ENCODE measurements at regions of chr20 and their contacts with region 1.

Region 1: GRCh38 chr20:561437-562231 is 18.0 kb upstream of the CSNK2A1 start:
- DNase-seq: peak; percentile 80 to 87
- ATAC-seq: peak; percentile 78 to 93
- H3K4me3 ChIP-seq: no peak overlapping the region
- H3K27ac ChIP-seq: no peak overlapping the region
- H3K4me1 ChIP-seq: no peaks in the 10 kb centered on the region
- CTCF ChIP-seq: peak; percentile 98
- EP300 ChIP-seq: no peak
- POLR2A ChIP-seq: no peak
- RAD21 ChIP-seq: peak; percentile 95 to 97

Region 2: GRCh38 chr20:543369-544152 is 18.1 kb before region 1 on chr20 and contains the start of gene CSNK2A1:
- CTCF ChIA-PET with region 1: interaction called, 85 read pairs
- POLR2A ChIA-PET with region 1: interaction called, 4 read pairs
- DNase-seq: peak; percentile 97 to 98
- ATAC-seq: peak; percentile 99
- H3K4me3 ChIP-seq: peak within 1 kb of the TSS; percentile 62
- H3K27ac ChIP-seq: peak within 1 kb of the TSS; percentile 90 to 99
- H3K4me1 ChIP-seq: peaks cover 9% of the 10 kb centered on the region; the same call in 2 of the 3 replicates
- CTCF ChIP-seq: no peak
- EP300 ChIP-seq: no peak
- POLR2A ChIP-seq: peak; percentile 94
- RAD21 ChIP-seq: no peak
- polyA plus RNA-seq, gene CSNK2A1: 231 and 306 TPM in 2 replicates

Region 3: GRCh38 chr20:577167-577791 is 15.6 kb after region 1 on chr20:
- CTCF ChIA-PET with region 1: interaction called, 91 read pairs
- POLR2A ChIA-PET with region 1: no interaction called
- DNase-seq: peak; percentile 55 to 79
- ATAC-seq: peak; percentile 58 to 91; a peak in 4 of 6 replicates
- H3K4me3 ChIP-seq: no peak overlapping the region
- H3K27ac ChIP-seq: no peak overlapping the region
- H3K4me1 ChIP-seq: no peaks in the 10 kb centered on the region
- CTCF ChIP-seq: peak; percentile 24; the same call in 1 of the 3 replicates
- EP300 ChIP-seq: no peak
- POLR2A ChIP-seq: no peak
- RAD21 ChIP-seq: no peak

Region 4: DNA sequence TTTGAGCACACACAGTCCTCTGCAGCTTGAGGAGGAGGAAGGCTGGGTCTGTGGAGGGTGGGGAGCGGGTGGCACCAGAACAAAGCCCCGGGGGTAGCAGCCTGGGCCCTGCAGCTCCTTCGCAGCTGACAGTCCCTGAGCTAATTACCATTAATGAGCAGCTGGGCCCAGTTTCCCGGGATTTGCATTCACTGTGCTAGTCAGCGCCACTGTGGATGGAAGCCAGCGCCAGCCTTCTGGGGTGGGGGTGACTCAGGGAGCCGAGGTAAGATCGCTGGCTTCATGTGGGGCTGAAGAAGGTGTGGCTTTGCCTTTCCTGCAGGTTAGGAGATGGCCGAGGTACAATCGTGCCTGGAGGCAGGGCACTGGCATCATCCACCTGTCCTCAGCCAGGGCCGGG is 72.9 kb after region 1 on chr20:
- CTCF ChIA-PET with region 1: interaction called, 23 read pairs
- POLR2A ChIA-PET with region 1: no interaction called
- DNase-seq: no peak
- ATAC-seq: no peak
- H3K4me3 ChIP-seq: no peak overlapping the region
- H3K27ac ChIP-seq: no peak overlapping the region
- H3K4me1 ChIP-seq: peaks cover 4% of the 10 kb centered on the region; the same call in 1 of the 3 replicates
- CTCF ChIP-seq: no peak
- EP300 ChIP-seq: no peak
- POLR2A ChIP-seq: no peak
- RAD21 ChIP-seq: no peak

Region 5: GRCh38 chr20:653110-653589 is 91.5 kb after region 1 on chr20 and contains the start of gene SRXN1:
- CTCF ChIA-PET with region 1: interaction called, 87 read pairs
- POLR2A ChIA-PET with region 1: no interaction called
- DNase-seq: peak; percentile 93 to 98
- ATAC-seq: peak; percentile 83 to 86
- H3K4me3 ChIP-seq: peak within 1 kb of the TSS; percentile 87
- H3K27ac ChIP-seq: peak within 1 kb of the TSS; percentile 98
- H3K4me1 ChIP-seq: peaks cover 29% of the 10 kb centered on the region
- CTCF ChIP-seq: peak; percentile 93
- EP300 ChIP-seq: peak; percentile 52 to 81; a peak in 3 of 5 replicates
- POLR2A ChIP-seq: peak; percentile 93
- RAD21 ChIP-seq: peak; percentile 58 to 80
- polyA plus RNA-seq, gene SRXN1: 262 and 302 TPM in 2 replicates

Region 6: GRCh38 chr20:667391-667964 is 105.8 kb after region 1 on chr20:
- CTCF ChIA-PET with region 1: interaction called, 26 read pairs
- POLR2A ChIA-PET with region 1: no interaction called
- DNase-seq: peak; percentile 69 to 80
- ATAC-seq: peak in 1 of 2 experiments; percentile 78; a peak in 3 of 6 replicates
- H3K4me3 ChIP-seq: no peak overlapping the region
- H3K27ac ChIP-seq: 0 out of 6 replicates have a peak overlapping the region, but pooled peaks of 1 of the 2 experiments have one; percentile 6
- H3K4me1 ChIP-seq: peaks cover 28% of the 10 kb centered on the region; the same call in 2 of the 3 replicates
- CTCF ChIP-seq: peak; percentile 90
- EP300 ChIP-seq: no peak
- POLR2A ChIP-seq: no peak
- RAD21 ChIP-seq: peak; percentile 57 to 71

Region 7: DNA sequence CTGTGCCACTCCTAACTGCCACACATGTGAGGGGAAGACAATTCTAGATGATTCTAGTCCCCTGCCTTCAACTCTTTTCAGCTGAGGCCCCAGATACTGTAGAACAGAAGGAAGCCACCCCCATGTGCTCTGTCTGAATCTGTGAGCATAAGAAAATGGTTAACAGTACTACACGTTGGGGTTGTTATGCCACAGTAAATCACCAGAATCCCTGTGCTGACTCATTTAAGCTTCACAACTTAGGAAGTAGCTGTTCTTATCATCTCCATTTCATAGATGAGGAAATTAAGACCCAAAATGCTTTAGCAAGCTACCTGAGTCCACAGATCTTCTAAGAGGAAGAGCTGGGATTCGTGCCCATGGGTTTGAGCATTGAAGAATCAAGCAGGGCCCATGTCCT is 141.4 kb after region 1 on chr20:
- CTCF ChIA-PET with region 1: interaction called, 10 read pairs
- POLR2A ChIA-PET with region 1: no interaction called
- DNase-seq: no peak
- ATAC-seq: no peak
- H3K4me3 ChIP-seq: no peak overlapping the region
- H3K27ac ChIP-seq: no peak overlapping the region
- H3K4me1 ChIP-seq: no peaks in the 10 kb centered on the region
- CTCF ChIP-seq: no peak
- EP300 ChIP-seq: no peak
- POLR2A ChIP-seq: no peak
- RAD21 ChIP-seq: no peak